ENCODE measurements at regions of chr1 and their contacts with region 1.

Region 1: DNA sequence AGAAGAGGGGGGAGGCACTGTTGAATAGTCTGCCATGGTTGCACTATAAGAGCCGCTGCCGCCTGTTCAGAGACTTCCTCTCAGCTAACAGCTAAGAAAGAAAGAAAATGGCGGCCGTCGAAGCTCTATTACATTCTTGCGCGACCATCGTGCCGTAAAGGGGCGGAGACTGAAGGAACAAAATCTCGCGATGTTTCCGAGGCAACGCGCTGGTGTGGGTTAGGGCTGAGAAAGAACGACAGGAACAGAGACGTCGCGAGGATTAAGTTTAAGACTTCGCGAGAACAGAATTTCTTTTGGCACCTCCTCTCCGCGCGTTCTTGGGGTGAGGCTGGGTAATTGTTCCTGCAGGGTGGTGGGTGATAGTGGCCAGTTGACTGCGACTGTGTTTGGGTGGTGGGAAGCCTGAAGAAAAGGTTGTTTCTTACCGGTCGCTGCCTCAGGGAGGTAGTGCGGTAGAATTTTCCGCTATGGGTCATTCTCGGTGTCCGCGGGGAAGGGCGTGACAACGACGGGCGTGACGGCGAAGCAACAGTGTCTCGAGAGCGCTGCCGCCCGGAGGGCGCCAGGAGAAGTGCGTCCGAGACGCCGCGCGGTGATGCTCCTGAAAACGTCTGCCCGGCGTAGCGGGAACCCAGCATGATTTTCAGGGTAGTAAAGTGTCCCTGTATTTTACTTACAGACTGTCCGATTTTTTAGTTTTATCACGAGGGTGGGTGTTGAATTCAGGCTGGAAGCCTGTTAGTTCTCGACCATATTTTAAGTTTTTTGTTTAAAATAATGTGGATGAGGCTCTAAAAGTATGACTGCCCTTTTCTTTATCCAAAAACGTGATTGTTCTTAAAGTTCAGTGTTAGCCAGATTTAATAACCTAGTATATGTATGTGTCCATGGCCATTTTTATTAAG is at the start of gene FUBP1:
- DNase-seq: peak; percentile 81 to 98 (median 97)
- ATAC-seq: peak; percentile 84
- H3K4me3 ChIP-seq: peak within 1 kb of the TSS; percentile 99
- H3K4me3 Mint-ChIP-seq: no peak within 1 kb of the TSS
- H3K27ac ChIP-seq: peak within 1 kb of the TSS; percentile 97
- H3K27ac Mint-ChIP-seq: no peak within 1 kb of the TSS
- H3K4me1 ChIP-seq: peaks cover 31 to 38% of the 10 kb centered on the region in 2 donors
- H3K4me1 Mint-ChIP-seq: peaks cover 28 to 54% (median 39%) of the 10 kb centered on the region in 7 donors
- H3K27me3 ChIP-seq: no peaks in the 10 kb centered on the region
- H3K27me3 Mint-ChIP-seq: no peaks in the 10 kb centered on the region
- total RNA-seq, gene FUBP1: 182 to 253 (median 224) TPM

Region 2: GRCh38 chr1:77759071-77760028 is 219.9 kb before region 1 on chr1 and contains the start of gene USP33:
- CTCF ChIA-PET with region 1: no interaction called
- POLR2A ChIA-PET with region 1: interaction called, 6 read pairs
- intact Hi-C with region 1: loop called (anchors 1 kb)
- DNase-seq: peak; percentile 87 to 98 (median 92)
- ATAC-seq: peak; percentile 98
- H3K4me3 ChIP-seq: peak within 1 kb of the TSS; percentile 61
- H3K4me3 Mint-ChIP-seq: peak within 1 kb of the TSS; percentile 93 to 98 (median 96)
- H3K27ac ChIP-seq: peak within 1 kb of the TSS; percentile 86
- H3K27ac Mint-ChIP-seq: peak within 1 kb of the TSS; percentile 84 to 97 (median 94)
- H3K4me1 ChIP-seq: peaks cover 24 to 25% of the 10 kb centered on the region in 2 donors
- H3K4me1 Mint-ChIP-seq: peaks cover 28 to 64% (median 43%) of the 10 kb centered on the region in 7 donors
- H3K27me3 ChIP-seq: no peaks in the 10 kb centered on the region
- H3K27me3 Mint-ChIP-seq: peaks cover 0 to 10% (median 0%) of the 10 kb centered on the region in 5 donors
- total RNA-seq, gene USP33: 54.0 to 101 (median 86.4) TPM

Region 3: GRCh38 chr1:77991638-77992037 is 12.4 kb after region 1 on chr1:
- CTCF ChIA-PET with region 1: no interaction called
- POLR2A ChIA-PET with region 1: interaction called, 324 read pairs
- intact Hi-C with region 1: no loop called
- DNase-seq: no peak
- ATAC-seq: no peak
- H3K4me3 ChIP-seq: no peak overlapping the region
- H3K4me3 Mint-ChIP-seq: no peak overlapping the region
- H3K27ac ChIP-seq: no peak overlapping the region
- H3K27ac Mint-ChIP-seq: no peak overlapping the region
- H3K4me1 ChIP-seq: no peaks in the 10 kb centered on the region
- H3K4me1 Mint-ChIP-seq: peaks cover 17 to 30% (median 20%) of the 10 kb centered on the region in 7 donors
- H3K27me3 ChIP-seq: no peaks in the 10 kb centered on the region
- H3K27me3 Mint-ChIP-seq: no peaks in the 10 kb centered on the region

Region 4: GRCh38 chr1:78045926-78046778 is 66.9 kb after region 1 on chr1 and contains the start of gene GIPC2:
- CTCF ChIA-PET with region 1: no interaction called
- POLR2A ChIA-PET with region 1: interaction called, 3 read pairs
- intact Hi-C with region 1: loop called in 1 of 2 experiments (anchors 1 kb)
- DNase-seq: peak in 8 of 9 donors; percentile 1 to 43 (median 18)
- ATAC-seq: peak; percentile 61
- H3K4me3 ChIP-seq: peak within 1 kb of the TSS; percentile 59
- H3K4me3 Mint-ChIP-seq: peak within 1 kb of the TSS; percentile 78 to 87 (median 83)
- H3K27ac ChIP-seq: no peak within 1 kb of the TSS
- H3K27ac Mint-ChIP-seq: peak within 1 kb of the TSS in 2 of 9 donors; percentile 45 to 51
- H3K4me1 ChIP-seq: no peaks in the 10 kb centered on the region
- H3K4me1 Mint-ChIP-seq: peaks cover 6 to 26% (median 19%) of the 10 kb centered on the region in 7 donors
- H3K27me3 ChIP-seq: peaks cover 0 to 19% of the 10 kb centered on the region in 2 donors
- H3K27me3 Mint-ChIP-seq: peaks cover 45 to 57% (median 50%) of the 10 kb centered on the region in 5 donors
- total RNA-seq, gene GIPC2: 0.57 to 0.60 TPM in 2 of 5 experiments, not detected in the others

Region 5: GRCh38 chr1:78617615-78618026 is 638.4 kb after region 1 on chr1:
- CTCF ChIA-PET with region 1: no interaction called
- POLR2A ChIA-PET with region 1: interaction called, 4 read pairs
- intact Hi-C with region 1: loop called (anchors 2 kb)
- DNase-seq: peak; percentile 13 to 82 (median 79)
- ATAC-seq: peak; percentile 84
- H3K4me3 ChIP-seq: no peak overlapping the region
- H3K4me3 Mint-ChIP-seq: peak overlapping the region in 3 of 10 donors; percentile 26 to 56 (median 44)
- H3K27ac ChIP-seq: no peak overlapping the region
- H3K27ac Mint-ChIP-seq: peak overlapping the region in 8 of 9 donors; percentile 23 to 99 (median 72)
- H3K4me1 ChIP-seq: peaks cover 7 to 19% of the 10 kb centered on the region in 2 donors
- H3K4me1 Mint-ChIP-seq: peaks cover 18 to 51% (median 42%) of the 10 kb centered on the region in 7 donors
- H3K27me3 ChIP-seq: no peaks in the 10 kb centered on the region
- H3K27me3 Mint-ChIP-seq: peaks cover 0 to 14% (median 0%) of the 10 kb centered on the region in 5 donors

Measured in naive thymus-derived CD4-positive, alpha-beta T cell (primary cell).